HEK293 (cell line): ENCODE measurements at regions of chr2 and their contacts with region 1.

Region 1: DNA sequence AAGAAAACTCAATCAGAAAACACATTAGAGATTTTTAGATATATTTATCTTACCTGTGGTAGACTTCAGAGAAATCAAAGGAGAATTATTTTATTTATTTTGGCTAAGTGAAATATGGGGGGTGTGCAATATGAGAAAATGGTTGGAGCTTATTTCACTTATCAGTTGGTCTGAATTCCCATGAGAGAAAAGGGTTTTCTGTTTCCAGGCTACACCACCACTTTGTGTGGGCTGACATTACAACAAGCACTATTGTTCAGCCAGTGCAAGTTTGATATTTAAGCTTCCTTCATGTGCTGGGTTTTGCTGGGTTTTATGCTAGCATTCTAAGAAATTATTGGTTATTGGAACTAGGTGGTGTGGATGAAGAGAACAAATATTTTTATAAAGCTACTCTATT is 33.5 kb downstream of the RMND5A start:
- H3K4me3 ChIP-seq: no peak overlapping the region
- H3K27ac ChIP-seq: no peak overlapping the region
- H3K4me1 ChIP-seq: no peaks in the 10 kb centered on the region
- CTCF ChIP-seq: no peak

Region 2: DNA sequence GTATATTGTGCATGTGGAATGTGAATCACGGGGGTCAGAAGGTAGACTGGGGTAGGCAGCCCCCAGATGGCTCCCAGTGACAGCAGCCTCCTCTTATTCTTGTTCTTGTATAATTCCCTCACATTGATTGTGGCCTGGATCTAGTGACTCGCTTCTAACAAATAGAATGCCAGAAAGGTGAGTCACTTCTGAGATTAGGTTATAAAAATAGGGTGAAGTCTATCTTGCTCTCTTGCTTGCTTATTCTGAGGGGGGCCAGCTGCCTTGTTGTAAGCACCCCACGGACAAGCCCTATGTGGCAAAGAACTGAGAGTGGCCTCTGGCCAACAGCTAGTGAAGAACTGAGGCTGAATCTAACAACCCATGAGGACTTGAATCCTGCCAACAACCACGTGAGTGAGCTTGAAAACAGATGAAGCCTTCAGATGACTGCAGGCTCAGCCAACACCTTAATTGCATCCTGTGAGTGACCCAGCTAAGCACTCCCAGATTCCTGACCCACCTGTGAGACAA is 49.1 kb before region 1 on chr2:
- CTCF ChIA-PET with region 1: no interaction called
- POLR2A ChIA-PET with region 1: no interaction called
- H3K4me3 ChIP-seq: no peak overlapping the region
- H3K27ac ChIP-seq: peak overlapping the region; percentile 50; the same call in 1 of the 2 replicates
- H3K4me1 ChIP-seq: peaks cover 13% of the 10 kb centered on the region; the same call in 1 of the 2 replicates
- CTCF ChIP-seq: no peak

Region 3: GRCh38 chr2:86764661-86765307 is 11.2 kb after region 1 on chr2:
- CTCF ChIA-PET with region 1: interaction called, 32 read pairs
- POLR2A ChIA-PET with region 1: no interaction called
- H3K4me3 ChIP-seq: no peak overlapping the region
- H3K27ac ChIP-seq: no peak overlapping the region
- H3K4me1 ChIP-seq: peaks cover 4% of the 10 kb centered on the region; the same call in 1 of the 2 replicates
- CTCF ChIP-seq: 0 out of 2 replicates have a peak, but pooled peaks have one; percentile 14